IMR-90 (cell line): ENCODE measurements at regions of chr1 and their contacts with region 1.

Region 1: DNA sequence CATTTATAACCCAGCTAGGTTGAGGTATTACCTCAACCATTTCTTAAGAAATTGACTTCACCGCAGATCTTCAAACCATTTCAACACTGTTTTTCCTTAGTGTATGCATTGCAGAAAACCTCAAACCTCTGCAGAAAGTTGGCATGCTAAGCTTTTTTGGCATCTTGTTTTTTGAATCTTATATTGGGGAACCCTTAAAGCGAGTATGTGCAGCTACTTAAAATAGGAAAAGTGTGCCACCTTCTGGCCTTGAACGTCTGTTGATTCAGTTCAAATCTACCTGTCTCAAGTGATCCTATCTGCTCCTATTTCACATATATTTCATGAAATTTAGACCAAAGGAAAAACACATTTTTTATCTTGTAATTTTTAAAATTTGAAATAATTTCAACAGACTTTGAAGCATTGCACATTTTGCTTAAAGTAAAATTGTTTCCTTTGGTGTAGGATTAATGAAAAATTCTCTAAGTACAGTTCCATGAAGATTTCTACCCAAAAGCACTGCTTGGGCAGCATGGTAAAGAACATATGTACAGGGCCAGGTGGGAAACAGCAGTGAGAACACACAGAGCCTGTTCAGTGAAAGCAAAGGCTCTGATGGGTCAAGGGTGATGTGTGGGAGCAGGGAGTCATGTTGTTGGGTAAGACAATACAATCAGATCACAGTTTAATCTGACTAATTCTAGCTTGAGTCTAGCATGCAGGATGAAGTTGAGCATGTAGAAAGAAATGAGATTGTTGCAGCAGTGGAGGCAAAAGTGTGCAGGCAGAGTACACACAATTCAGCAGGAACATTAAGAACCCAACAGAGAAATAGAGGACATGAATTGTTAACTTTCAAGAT is 17.2 kb downstream of the HENMT1 start:
- DNase-seq: peak; percentile 78
- ATAC-seq: peak; percentile 79
- H3K4me3 ChIP-seq: no peak overlapping the region
- H3K27ac ChIP-seq: no peak overlapping the region
- H3K4me1 ChIP-seq: peaks cover 5% of the 10 kb centered on the region
- H3K27me3 ChIP-seq: no peaks in the 10 kb centered on the region
- CTCF ChIP-seq: peak; percentile 80
- POLR2A ChIP-seq: no peak
- RAD21 ChIP-seq: peak; percentile 82

Region 2: DNA sequence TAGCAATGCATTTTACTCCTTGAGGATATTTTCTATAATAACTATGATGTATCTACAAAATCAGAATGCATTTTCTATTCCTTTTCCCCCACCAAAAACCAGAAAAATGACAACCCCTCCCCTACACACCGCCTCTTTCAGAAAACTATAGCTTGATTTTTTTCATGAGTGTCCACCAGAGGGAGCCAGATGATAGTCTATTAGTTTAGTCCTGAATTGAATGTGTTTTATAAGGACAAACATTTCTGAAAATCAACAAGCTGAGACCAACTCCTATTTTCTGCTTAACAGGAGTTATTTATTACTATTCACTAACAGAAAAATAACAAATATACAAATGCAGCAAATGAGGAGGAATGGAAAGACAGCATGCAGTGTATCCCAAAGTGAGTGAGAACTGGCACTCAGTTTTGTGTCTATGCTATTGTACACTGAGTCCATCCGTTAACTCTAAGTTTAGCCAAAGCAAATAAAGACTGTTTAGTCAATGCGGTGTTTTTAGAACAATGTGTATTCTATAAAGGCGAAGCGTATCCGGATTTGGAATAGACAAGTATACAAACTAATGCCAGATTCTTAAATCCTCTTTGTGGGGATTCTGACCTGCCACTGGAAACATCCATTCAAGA is 861.4 kb before region 1 on chr1:
- CTCF ChIA-PET with region 1: no interaction called
- POLR2A ChIA-PET with region 1: no interaction called
- dilution Hi-C with region 1: no loop called
- in situ Hi-C with region 1: no loop called
- intact Hi-C with region 1: loop called (anchors 10 kb)
- DNase-seq: peak; percentile 53
- ATAC-seq: peak; percentile 68; the same call in 1 of the 2 replicates
- H3K4me3 ChIP-seq: no peak overlapping the region
- H3K27ac ChIP-seq: no peak overlapping the region
- H3K4me1 ChIP-seq: no peaks in the 10 kb centered on the region
- H3K27me3 ChIP-seq: no peaks in the 10 kb centered on the region
- CTCF ChIP-seq: peak; percentile 68
- POLR2A ChIP-seq: no peak
- RAD21 ChIP-seq: peak; percentile 70

Region 3: DNA sequence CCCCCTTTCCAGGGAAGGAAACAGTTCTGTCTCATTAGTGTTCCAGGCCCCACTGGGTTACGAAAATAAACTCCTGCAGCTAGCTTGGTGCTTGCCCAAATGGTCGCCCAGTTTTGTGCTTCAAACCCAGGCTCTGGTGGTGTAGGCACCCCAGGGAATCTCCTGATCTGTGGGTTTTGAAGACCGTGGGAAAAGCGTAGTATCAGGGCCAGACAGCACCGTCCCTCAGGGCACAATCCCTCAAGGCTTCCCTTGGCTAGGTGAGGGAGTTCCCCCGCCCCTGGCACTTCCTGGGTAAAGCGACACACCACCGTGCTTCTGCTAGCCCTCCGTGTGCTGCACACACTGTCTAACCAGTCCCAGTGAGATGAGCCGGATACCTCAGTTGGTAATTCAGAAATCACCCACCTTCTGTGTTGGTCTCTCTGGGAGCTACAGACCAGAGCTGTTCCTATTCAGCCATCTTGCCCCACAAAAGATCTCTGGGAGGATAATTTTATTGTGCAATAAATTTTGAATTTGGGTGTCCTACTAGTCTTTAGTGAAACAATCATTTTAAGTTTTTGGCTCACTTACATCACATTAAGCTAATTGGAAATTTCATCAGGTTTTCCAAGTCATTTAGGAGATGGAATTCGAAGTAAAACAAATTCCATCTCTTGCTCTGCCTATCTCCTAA is 434.1 kb before region 1 on chr1:
- CTCF ChIA-PET with region 1: no interaction called
- POLR2A ChIA-PET with region 1: no interaction called
- dilution Hi-C with region 1: no loop called
- in situ Hi-C with region 1: no loop called
- intact Hi-C with region 1: loop called (anchors 10 kb)
- DNase-seq: no peak
- ATAC-seq: no peak
- H3K4me3 ChIP-seq: no peak overlapping the region
- H3K27ac ChIP-seq: no peak overlapping the region
- H3K4me1 ChIP-seq: no peaks in the 10 kb centered on the region
- H3K27me3 ChIP-seq: peaks cover 19% of the 10 kb centered on the region
- CTCF ChIP-seq: no peak
- POLR2A ChIP-seq: no peak
- RAD21 ChIP-seq: no peak

Region 4: DNA sequence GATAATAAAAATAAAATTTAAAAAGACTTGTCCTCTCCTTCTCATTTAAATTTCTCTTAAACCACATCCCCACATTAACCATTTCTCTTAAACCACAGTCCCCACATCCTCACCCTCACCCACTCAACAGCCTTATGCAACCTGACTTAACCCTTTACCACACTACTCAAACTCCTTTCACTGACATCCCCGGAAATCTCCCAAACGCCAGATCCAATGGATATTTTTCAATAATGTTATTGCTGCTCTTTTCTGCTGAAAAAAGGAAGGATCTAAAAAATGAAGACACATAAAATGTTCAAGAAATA is 138.0 kb before region 1 on chr1:
- CTCF ChIA-PET with region 1: interaction called, 4 read pairs
- POLR2A ChIA-PET with region 1: no interaction called
- dilution Hi-C with region 1: no loop called
- in situ Hi-C with region 1: loop called (anchors 5 kb)
- intact Hi-C with region 1: no loop called
- DNase-seq: no peak
- ATAC-seq: no peak
- H3K4me3 ChIP-seq: no peak overlapping the region
- H3K27ac ChIP-seq: no peak overlapping the region
- H3K4me1 ChIP-seq: peaks cover 7% of the 10 kb centered on the region
- H3K27me3 ChIP-seq: peaks cover 6% of the 10 kb centered on the region; the same call in 1 of the 2 replicates
- CTCF ChIP-seq: no peak
- POLR2A ChIP-seq: no peak
- RAD21 ChIP-seq: no peak

Region 5: GRCh38 chr1:108512239-108512981 is 131.3 kb before region 1 on chr1:
- CTCF ChIA-PET with region 1: interaction called, 27 read pairs
- POLR2A ChIA-PET with region 1: no interaction called
- dilution Hi-C with region 1: no loop called
- in situ Hi-C with region 1: loop called (anchors 5 kb)
- intact Hi-C with region 1: loop called (anchors 1 kb)
- DNase-seq: peak; percentile 50
- ATAC-seq: peak; percentile 82
- H3K4me3 ChIP-seq: no peak overlapping the region
- H3K27ac ChIP-seq: no peak overlapping the region
- H3K4me1 ChIP-seq: no peaks in the 10 kb centered on the region
- H3K27me3 ChIP-seq: peaks cover 9% of the 10 kb centered on the region
- CTCF ChIP-seq: peak; percentile 94
- POLR2A ChIP-seq: no peak
- RAD21 ChIP-seq: peak; percentile 93

Region 6: DNA sequence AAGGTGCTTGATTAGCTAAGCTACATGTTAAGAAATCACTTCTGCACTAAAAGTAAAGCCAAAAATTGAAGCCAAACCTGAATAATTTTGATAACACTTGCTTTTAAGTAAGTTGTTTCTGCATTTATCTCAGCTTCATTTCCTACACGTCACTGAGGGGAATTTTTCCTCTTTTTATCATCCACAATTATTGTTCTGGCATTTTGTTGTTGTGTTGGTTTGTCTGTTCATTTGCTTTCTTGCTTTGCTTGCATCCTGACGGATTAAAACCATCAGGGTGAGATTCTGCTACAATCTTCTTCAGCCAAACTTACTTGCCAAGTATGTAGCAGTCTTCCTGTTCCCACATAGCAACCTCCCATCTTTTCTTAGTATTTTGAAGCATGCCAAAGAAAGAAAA is 101.9 kb before region 1 on chr1:
- CTCF ChIA-PET with region 1: no interaction called
- POLR2A ChIA-PET with region 1: no interaction called
- dilution Hi-C with region 1: no loop called
- in situ Hi-C with region 1: no loop called
- intact Hi-C with region 1: no loop called
- DNase-seq: no peak
- ATAC-seq: no peak
- H3K4me3 ChIP-seq: no peak overlapping the region
- H3K27ac ChIP-seq: no peak overlapping the region
- H3K4me1 ChIP-seq: no peaks in the 10 kb centered on the region
- H3K27me3 ChIP-seq: peaks cover 4% of the 10 kb centered on the region
- CTCF ChIP-seq: no peak
- POLR2A ChIP-seq: no peak
- RAD21 ChIP-seq: no peak

Region 7: DNA sequence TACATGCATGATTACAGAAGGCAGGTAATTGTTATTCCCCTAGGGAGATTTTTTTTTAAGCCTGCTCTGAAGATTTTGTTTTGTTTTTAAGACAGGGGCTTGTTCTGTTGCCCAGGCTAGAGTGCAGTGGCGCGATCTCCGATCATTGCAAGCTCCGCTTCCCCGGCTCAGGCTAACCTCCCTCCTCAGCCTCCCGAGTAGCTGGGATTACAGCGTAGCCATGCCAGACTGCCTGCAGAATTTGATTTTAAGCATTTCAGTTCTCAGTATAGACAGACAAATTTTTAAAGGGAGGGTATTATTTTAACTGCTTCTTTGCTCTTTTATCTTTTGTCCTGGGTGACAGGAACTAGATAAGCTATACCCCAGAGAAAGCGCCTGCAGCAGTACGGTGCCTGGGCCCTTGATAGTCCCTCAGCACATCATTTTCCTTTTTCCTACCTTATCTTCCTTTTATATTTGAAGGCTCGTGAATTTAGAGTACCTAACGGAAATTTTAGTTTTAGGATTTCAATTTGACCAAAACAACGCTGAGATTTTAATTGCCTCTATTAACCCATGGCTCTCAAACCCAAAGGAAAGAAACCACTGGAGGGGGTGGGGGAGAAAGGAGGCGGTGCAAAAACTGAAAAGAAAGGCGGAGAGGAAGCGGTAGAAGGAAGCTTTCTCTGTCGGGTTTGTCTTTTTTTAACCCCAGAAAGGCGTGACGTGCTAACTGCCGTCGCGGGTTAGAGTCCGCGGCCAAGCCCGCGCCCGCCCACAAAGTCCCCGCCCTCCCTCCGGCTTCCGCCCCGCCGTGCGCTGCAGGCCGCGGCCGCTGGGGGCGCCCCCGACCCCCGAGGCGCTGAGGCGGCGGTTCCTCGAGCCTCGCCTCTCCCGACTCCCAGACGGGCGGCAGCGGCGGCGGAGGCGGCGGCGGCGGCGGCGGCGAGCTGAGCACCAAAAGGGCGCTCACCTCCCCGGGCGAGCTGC is 84.2 kb before region 1 on chr1 and contains the start of gene EEIG2:
- CTCF ChIA-PET with region 1: interaction called, 13 read pairs
- POLR2A ChIA-PET with region 1: no interaction called
- dilution Hi-C with region 1: no loop called
- in situ Hi-C with region 1: no loop called
- intact Hi-C with region 1: loop called (anchors 2 kb)
- DNase-seq: peak; percentile 82
- ATAC-seq: peak; percentile 99
- H3K4me3 ChIP-seq: peak within 1 kb of the TSS; percentile 82
- H3K27ac ChIP-seq: peak within 1 kb of the TSS; percentile 39
- H3K4me1 ChIP-seq: no peaks in the 10 kb centered on the region; the same call in 1 of the 2 replicates
- H3K27me3 ChIP-seq: peaks cover 3% of the 10 kb centered on the region
- CTCF ChIP-seq: peak; percentile 88
- POLR2A ChIP-seq: no peak
- RAD21 ChIP-seq: peak; percentile 48
- total RNA-seq, gene EEIG2: 4.8 and 5.8 TPM in 2 replicates

Region 8: GRCh38 chr1:108664481-108664880 is 20.8 kb after region 1 on chr1:
- CTCF ChIA-PET with region 1: no interaction called
- POLR2A ChIA-PET with region 1: no interaction called
- dilution Hi-C with region 1: no loop called
- in situ Hi-C with region 1: no loop called
- intact Hi-C with region 1: no loop called
- DNase-seq: no peak
- ATAC-seq: no peak
- H3K4me3 ChIP-seq: no peak overlapping the region
- H3K27ac ChIP-seq: no peak overlapping the region
- H3K4me1 ChIP-seq: peaks cover 2% of the 10 kb centered on the region; the same call in 1 of the 2 replicates
- H3K27me3 ChIP-seq: no peaks in the 10 kb centered on the region
- CTCF ChIP-seq: no peak
- POLR2A ChIP-seq: no peak
- RAD21 ChIP-seq: no peak

Region 9: DNA sequence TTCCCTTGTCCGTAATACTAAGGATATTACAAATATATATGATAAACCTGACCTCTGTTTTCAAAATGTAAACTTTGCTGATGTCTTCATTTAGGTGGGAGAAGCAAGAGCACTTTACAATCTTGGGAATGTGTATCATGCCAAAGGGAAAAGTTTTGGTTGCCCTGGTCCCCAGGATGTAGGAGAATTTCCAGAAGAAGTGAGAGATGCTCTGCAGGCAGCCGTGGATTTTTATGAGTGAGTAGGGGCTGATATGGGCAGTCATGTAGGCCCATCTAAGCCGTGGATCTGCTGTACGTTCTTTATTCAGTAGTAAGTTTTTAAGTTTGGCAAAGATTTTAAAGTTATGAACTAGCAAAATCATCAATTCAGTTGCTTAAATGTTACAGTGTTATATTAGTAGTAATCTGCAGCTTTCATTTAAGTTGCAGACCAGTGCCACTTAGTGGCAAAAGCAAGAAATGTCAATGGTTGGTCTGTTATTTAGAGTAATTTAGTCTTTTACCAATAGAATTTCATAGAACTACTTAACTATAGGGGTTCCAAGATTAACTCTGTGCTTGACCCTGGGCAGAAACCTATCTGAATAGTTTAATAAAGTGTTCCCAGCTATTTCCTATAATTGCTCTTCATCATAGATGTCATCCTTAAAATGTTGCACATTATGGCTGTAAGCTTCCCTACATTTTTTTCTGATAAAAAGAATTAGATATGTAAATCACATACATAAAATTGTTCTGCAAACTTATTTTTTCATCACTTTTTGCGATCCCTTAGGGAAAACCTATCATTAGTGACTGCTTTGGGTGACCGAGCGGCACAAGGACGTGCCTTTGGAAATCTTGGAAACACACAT is 254.4 kb after region 1 on chr1:
- CTCF ChIA-PET with region 1: no interaction called
- POLR2A ChIA-PET with region 1: no interaction called
- dilution Hi-C with region 1: no loop called
- in situ Hi-C with region 1: no loop called
- intact Hi-C with region 1: loop called (anchors 2 kb)
- DNase-seq: peak; percentile 79
- ATAC-seq: peak; percentile 80
- H3K4me3 ChIP-seq: no peak overlapping the region
- H3K27ac ChIP-seq: no peak overlapping the region
- H3K4me1 ChIP-seq: peaks cover 4% of the 10 kb centered on the region
- H3K27me3 ChIP-seq: no peaks in the 10 kb centered on the region
- CTCF ChIP-seq: peak; percentile 87
- POLR2A ChIP-seq: no peak
- RAD21 ChIP-seq: peak; percentile 84

Region 10: DNA sequence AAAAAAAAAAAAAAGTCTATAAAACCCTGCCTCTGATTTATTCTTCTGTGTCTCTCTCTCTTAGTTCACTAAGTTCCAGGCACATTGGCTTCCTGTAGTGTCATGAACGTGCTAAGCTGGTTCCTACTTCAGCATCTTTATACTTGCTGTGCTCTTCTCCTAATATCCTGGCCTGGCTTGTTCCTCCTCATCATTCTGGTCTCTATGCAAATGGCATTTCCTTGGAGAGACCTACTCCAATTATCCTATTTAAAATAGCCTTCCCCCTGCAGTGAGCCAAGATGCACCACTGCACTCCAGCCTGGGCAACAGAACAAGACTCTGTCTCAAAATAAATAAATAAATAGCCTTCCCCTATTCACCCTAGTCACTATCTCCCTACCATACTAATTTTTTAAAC is 329.2 kb after region 1 on chr1:
- CTCF ChIA-PET with region 1: no interaction called
- POLR2A ChIA-PET with region 1: no interaction called
- dilution Hi-C with region 1: no loop called
- in situ Hi-C with region 1: no loop called
- intact Hi-C with region 1: no loop called
- DNase-seq: no peak
- ATAC-seq: no peak
- H3K4me3 ChIP-seq: no peak overlapping the region
- H3K27ac ChIP-seq: no peak overlapping the region
- H3K4me1 ChIP-seq: no peaks in the 10 kb centered on the region
- H3K27me3 ChIP-seq: no peaks in the 10 kb centered on the region
- CTCF ChIP-seq: no peak
- POLR2A ChIP-seq: no peak
- RAD21 ChIP-seq: no peak